Endothelial cell of umbilical vein (primary cell): ENCODE measurements at regions of chr18 and their contacts with region 1.

Region 1: DNA sequence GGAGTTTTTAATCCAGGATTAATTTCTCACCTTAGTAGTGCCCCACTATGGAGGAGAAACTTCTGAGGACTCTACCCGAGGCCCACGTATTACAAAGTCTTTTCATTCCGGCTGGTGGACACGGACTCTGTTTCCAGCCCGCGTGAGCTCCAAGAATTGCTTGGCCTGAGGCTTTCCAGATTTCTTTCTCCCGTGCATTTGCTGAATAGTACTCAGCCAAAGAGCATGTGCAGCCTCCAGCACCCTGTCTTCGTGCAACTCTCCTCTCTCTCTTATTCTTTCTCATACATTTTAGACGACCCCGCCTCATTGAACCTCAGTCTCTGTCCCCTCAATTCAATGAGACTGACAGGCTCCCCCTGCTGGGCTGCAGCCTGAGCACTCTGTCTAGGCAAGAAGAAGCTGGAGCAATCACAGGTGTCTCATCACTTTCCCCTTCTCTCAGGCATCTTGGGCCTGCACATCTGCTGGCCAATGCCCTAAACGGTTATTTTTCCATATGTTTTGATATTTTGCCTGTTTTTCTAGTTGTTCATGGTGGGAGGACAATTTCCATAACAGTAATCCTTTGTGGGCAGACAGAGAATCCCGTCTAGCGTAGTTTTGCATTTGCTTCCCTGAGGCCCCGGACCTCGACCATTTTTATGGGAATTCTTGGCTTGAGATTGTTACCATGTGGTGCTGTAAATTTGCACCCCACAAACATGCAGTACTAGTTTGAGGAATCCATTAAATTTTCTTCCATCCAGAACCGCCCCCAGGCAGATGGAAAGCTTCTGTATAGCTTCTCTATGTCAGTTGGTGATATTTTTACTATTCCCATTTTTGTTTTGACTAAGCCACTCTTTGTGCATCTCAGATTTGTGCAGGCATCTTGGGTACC is 50.1 kb upstream of the LPIN2 start:
- DNase-seq: peak; percentile 46
- H3K4me3 ChIP-seq: no peak overlapping the region
- H3K27ac ChIP-seq: no peak overlapping the region
- H3K4me1 ChIP-seq: peaks cover 8% of the 10 kb centered on the region
- H3K27me3 ChIP-seq: no peaks in the 10 kb centered on the region
- CTCF ChIP-seq: peak; percentile 70 to 82
- POLR2A ChIP-seq: no peak

Region 2: GRCh38 chr18:2529154-2529553 is 533.9 kb before region 1 on chr18:
- CTCF ChIA-PET with region 1: no interaction called
- POLR2A ChIA-PET with region 1: no interaction called
- dilution Hi-C with region 1: no loop called
- intact Hi-C with region 1: no loop called
- DNase-seq: no peak
- H3K4me3 ChIP-seq: no peak overlapping the region
- H3K27ac ChIP-seq: no peak overlapping the region
- H3K4me1 ChIP-seq: no peaks in the 10 kb centered on the region
- H3K27me3 ChIP-seq: no peaks in the 10 kb centered on the region
- CTCF ChIP-seq: no peak
- POLR2A ChIP-seq: no peak

Region 3: GRCh38 chr18:2797951-2798350 is 265.1 kb before region 1 on chr18:
- CTCF ChIA-PET with region 1: no interaction called
- POLR2A ChIA-PET with region 1: no interaction called
- dilution Hi-C with region 1: no loop called
- intact Hi-C with region 1: no loop called
- DNase-seq: no peak
- H3K4me3 ChIP-seq: no peak overlapping the region
- H3K27ac ChIP-seq: no peak overlapping the region
- H3K4me1 ChIP-seq: no peaks in the 10 kb centered on the region
- H3K27me3 ChIP-seq: no peaks in the 10 kb centered on the region
- CTCF ChIP-seq: no peak
- POLR2A ChIP-seq: no peak

Region 4: DNA sequence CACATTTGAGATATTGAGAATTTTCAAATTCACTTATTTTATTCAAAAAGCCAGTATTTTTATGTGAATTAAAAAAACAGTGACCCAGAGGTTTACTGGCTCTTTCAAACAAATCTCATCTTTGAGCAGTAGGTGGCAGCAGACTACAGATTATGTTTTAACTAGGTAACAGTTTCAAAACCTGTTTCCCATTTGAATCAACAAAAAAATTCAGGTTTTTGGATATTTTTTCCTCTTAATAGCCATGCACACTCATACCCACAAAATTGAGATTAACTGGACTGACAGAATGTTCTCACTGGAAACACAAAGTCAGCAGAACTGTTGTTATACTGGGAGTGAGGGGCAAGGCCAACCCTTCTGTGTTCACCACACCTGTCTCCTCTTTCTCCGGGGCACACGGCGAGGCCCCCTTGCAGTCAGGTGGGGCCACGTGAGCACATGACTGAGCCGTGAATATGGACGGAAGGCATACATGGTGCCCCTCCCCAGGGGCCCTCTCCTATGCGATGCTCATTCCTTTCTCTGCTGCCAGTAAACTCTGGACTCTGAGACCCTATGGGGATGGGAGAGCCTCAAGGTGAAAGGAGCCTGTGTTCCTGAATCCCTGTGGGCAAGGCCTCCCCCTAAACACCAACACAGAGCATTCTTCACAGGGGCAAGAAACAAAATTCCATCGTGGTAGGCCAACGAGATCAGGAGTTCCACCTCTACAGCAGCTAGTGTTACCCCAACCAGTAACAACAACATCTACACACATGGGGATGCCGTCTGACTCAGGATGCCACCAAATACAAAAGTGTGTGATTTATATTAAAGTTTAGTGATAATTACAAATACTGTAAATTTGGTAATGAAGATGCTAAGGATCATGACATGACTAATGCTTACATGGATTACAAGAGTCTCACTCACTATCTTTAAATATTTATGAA is 130.5 kb before region 1 on chr18:
- CTCF ChIA-PET with region 1: interaction called, 36 read pairs
- POLR2A ChIA-PET with region 1: no interaction called
- dilution Hi-C with region 1: no loop called
- intact Hi-C with region 1: loop called (anchors 2 kb)
- DNase-seq: peak; percentile 64
- H3K4me3 ChIP-seq: no peak overlapping the region
- H3K27ac ChIP-seq: no peak overlapping the region
- H3K4me1 ChIP-seq: no peaks in the 10 kb centered on the region
- H3K27me3 ChIP-seq: no peaks in the 10 kb centered on the region
- CTCF ChIP-seq: peak; percentile 44 to 48
- POLR2A ChIP-seq: no peak

Region 5: DNA sequence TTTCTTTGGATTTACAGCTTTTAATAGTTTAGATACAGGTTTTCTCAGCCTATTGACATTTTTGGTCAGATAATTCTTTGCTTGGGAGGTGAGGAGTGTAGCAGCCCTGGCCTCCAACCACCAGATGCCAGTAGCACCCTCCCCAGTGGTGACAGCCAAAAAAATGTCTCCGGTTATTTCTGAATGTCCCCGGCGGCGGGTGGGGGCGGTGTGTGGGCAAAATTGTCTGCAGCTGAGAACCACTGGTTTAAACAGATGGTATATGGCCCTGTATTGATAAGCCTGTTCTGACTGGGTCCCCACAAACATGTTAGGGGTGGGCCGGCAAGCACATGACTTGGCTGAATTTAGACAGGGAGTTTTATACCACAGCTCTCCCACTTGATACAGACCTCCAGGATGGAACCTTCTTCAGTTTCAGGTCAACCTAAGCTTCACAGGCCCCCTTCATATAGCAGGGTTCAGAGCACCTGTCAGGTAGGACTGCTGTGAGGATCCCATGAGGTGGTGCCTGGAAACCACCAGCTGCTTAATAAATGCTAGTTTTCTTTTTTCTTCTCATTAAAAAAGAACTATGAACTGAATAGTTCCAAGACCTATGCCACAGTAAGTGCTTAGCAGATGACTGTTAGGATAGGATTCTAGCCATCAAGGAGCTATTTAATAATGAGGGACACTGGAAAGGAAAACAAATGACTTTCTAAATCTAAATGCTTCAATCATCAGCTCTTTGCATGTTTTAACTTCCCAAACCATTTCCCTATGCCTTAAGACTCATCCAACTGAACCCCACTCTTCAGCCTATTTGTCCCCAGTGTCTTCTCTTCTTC is 68.2 kb before region 1 on chr18:
- CTCF ChIA-PET with region 1: interaction called, 50 read pairs
- POLR2A ChIA-PET with region 1: no interaction called
- dilution Hi-C with region 1: no loop called
- intact Hi-C with region 1: no loop called
- DNase-seq: no peak
- H3K4me3 ChIP-seq: no peak overlapping the region
- H3K27ac ChIP-seq: no peak overlapping the region
- H3K4me1 ChIP-seq: no peaks in the 10 kb centered on the region
- H3K27me3 ChIP-seq: no peaks in the 10 kb centered on the region
- CTCF ChIP-seq: peak in 1 of 2 donors; percentile 9
- POLR2A ChIP-seq: no peak

Region 6: DNA sequence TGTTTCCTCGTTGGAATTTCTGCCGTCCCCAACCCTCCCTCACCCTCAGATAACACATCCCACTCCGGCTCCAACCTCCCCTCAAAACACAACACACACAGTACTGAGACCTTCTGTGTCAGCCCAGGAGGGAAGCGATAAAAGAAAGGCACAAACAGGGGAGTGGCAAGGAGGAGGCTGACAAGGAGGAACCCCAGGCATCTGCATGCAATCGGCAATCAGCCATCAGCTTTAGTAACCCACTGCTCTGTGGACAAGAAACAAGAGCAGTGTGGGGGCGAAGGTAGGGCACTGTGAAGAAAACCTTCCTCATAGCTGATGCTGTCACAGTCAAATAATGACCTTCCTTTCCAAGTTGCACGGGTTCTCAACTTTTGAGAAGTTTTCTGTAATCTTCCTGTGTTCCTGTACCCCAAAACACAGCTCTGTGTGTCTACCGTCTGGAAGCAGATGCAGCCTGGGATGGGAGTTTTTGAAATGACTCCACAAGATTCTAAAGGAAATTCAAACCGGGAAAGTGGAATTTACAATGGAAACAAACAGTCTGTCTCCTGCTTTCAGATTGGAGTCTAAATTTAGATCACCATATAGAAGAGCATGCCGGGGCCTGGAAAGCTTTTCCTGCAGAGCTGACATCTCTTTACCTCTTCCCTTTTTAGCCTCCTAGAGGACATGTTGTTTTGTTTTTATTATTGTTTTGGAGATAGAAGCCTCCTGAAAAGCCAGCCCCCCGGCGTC is 33.7 kb before region 1 on chr18:
- CTCF ChIA-PET with region 1: interaction called, 14 read pairs
- POLR2A ChIA-PET with region 1: no interaction called
- dilution Hi-C with region 1: no loop called
- intact Hi-C with region 1: no loop called
- DNase-seq: peak; percentile 72
- H3K4me3 ChIP-seq: no peak overlapping the region
- H3K27ac ChIP-seq: no peak overlapping the region
- H3K4me1 ChIP-seq: peaks cover 9% of the 10 kb centered on the region
- H3K27me3 ChIP-seq: no peaks in the 10 kb centered on the region
- CTCF ChIP-seq: no peak
- POLR2A ChIP-seq: no peak

Region 7: GRCh38 chr18:3074087-3074486 is 11.0 kb after region 1 on chr18:
- CTCF ChIA-PET with region 1: interaction called, 104 read pairs
- POLR2A ChIA-PET with region 1: no interaction called
- dilution Hi-C with region 1: no loop called
- intact Hi-C with region 1: no loop called
- DNase-seq: no peak
- H3K4me3 ChIP-seq: no peak overlapping the region
- H3K27ac ChIP-seq: no peak overlapping the region
- H3K4me1 ChIP-seq: no peaks in the 10 kb centered on the region
- H3K27me3 ChIP-seq: no peaks in the 10 kb centered on the region
- CTCF ChIP-seq: no peak
- POLR2A ChIP-seq: no peak

Region 8: DNA sequence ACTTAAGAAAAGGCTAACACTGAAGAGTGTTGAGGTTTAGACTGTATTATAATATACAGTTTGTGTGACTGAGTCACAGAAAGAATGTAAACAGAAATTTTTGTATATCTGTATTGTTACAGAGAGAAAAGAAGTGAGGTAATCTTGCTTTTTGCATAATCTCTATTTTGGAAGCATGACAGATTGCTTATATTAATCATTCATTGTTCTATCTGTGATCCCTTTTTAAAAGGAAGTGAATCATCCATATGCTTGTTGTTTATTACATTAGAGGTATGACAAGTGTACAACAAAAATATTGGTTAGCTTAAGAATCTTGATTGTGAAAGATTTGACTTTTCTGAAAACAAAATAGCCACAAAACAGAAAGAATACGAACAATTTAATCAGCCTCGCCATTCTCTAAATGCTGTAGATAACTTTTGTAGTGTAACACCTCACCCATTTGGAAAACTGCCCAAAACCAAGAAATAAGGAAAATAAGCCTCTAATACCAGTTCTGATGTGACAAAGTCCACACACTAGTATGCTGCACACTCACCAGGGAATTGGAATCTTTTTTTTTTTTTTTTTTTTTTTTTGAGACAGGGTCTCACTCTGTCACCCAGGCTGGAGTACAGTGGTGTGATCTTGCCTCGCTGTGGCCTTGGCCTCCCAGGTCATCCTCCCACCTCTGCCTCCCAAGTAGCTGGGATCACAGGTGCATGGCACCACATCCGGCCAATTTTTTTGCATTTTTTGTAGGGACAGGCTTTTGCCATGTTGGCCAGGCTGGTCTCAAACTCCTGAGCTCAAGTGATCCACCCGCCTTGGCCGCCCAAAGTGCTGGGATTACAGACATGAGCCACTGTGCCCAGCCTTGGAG is 41.4 kb after region 1 on chr18:
- CTCF ChIA-PET with region 1: interaction called, 4 read pairs
- POLR2A ChIA-PET with region 1: no interaction called
- dilution Hi-C with region 1: no loop called
- intact Hi-C with region 1: loop called (anchors 1 kb)
- DNase-seq: peak; percentile 91
- H3K4me3 ChIP-seq: peak overlapping the region in 1 of 3 experiments; percentile 21
- H3K27ac ChIP-seq: peak overlapping the region; percentile 96
- H3K4me1 ChIP-seq: peaks cover 30% of the 10 kb centered on the region
- H3K27me3 ChIP-seq: no peaks in the 10 kb centered on the region
- CTCF ChIP-seq: no peak
- POLR2A ChIP-seq: no peak

Region 9: GRCh38 chr18:3151399-3152264 is 88.6 kb after region 1 on chr18:
- CTCF ChIA-PET with region 1: interaction called, 27 read pairs
- POLR2A ChIA-PET with region 1: no interaction called
- dilution Hi-C with region 1: no loop called
- intact Hi-C with region 1: no loop called
- DNase-seq: peak; percentile 35
- H3K4me3 ChIP-seq: no peak overlapping the region
- H3K27ac ChIP-seq: no peak overlapping the region
- H3K4me1 ChIP-seq: peaks cover 12% of the 10 kb centered on the region
- H3K27me3 ChIP-seq: no peaks in the 10 kb centered on the region
- CTCF ChIP-seq: peak; percentile 54
- POLR2A ChIP-seq: no peak